ENCODE measurements at regions of chrX and their contacts with region 1.

Region 1: GRCh38 chrX:138638996-138639395 is 72.5 kb downstream of the FGF13 start:
- DNase-seq: no peak
- ATAC-seq: no peak
- H3K4me3 ChIP-seq: no peak overlapping the region
- H3K4me3 Mint-ChIP-seq: no peak overlapping the region
- H3K27ac ChIP-seq: no peak overlapping the region
- H3K27ac Mint-ChIP-seq: no peak overlapping the region
- H3K4me1 ChIP-seq: no peaks in the 10 kb centered on the region
- H3K4me1 Mint-ChIP-seq: no peaks in the 10 kb centered on the region
- H3K27me3 ChIP-seq: no peaks in the 10 kb centered on the region
- H3K27me3 Mint-ChIP-seq: no peaks in the 10 kb centered on the region
- CTCF ChIP-seq: no peak

Region 2: DNA sequence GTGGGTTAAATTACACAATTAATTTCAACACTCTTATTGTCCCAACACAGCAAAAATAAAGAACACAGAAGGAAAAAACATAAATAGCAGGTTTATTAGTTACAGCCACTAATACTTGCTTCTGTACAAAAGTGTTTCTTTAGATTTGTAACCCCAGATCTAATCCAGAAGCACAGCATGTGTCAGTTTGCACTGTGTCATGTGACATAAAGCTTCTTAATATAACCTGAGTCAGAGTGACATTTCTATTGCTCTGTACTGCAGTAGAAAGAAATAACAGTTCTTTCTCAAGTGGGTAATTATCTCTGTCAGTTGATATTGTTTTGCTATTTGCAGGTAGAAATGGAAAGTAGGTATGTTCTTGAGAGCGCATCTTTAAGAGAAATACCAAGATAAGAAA is 650.5 kb before region 1 on chrX:
- CTCF ChIA-PET with region 1: no interaction called
- POLR2A ChIA-PET with region 1: no interaction called
- intact Hi-C with region 1: no loop called
- DNase-seq: no peak
- ATAC-seq: no peak
- H3K4me3 ChIP-seq: no peak overlapping the region
- H3K4me3 Mint-ChIP-seq: no peak overlapping the region
- H3K27ac ChIP-seq: no peak overlapping the region
- H3K27ac Mint-ChIP-seq: no peak overlapping the region
- H3K4me1 ChIP-seq: no peaks in the 10 kb centered on the region
- H3K4me1 Mint-ChIP-seq: no peaks in the 10 kb centered on the region
- H3K27me3 ChIP-seq: no peaks in the 10 kb centered on the region
- H3K27me3 Mint-ChIP-seq: no peaks in the 10 kb centered on the region
- CTCF ChIP-seq: no peak

Region 3: DNA sequence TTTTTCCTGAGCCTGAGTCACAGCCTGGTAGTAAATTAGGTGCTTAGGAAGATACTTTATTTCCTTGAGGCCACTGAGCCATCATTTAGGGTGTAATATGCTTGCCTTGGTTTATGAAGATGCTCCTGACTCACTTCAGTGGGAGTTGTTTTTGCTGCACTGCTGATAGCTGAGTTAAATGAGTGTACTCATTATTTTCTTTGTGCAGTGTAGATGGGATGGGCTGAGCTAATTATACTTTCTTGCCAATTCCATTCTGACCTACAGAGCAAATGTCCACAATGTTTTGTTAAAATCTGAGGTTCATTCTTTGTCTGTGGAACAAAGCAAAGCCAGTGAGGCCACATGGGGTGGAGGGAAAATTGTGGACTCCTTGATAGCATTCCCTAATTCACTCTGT is 12.5 kb after region 1 on chrX:
- CTCF ChIA-PET with region 1: no interaction called
- POLR2A ChIA-PET with region 1: no interaction called
- intact Hi-C with region 1: loop called in 1 of 2 experiments (anchors 1 kb)
- DNase-seq: no peak
- ATAC-seq: no peak
- H3K4me3 ChIP-seq: no peak overlapping the region
- H3K4me3 Mint-ChIP-seq: no peak overlapping the region
- H3K27ac ChIP-seq: no peak overlapping the region
- H3K27ac Mint-ChIP-seq: no peak overlapping the region
- H3K4me1 ChIP-seq: no peaks in the 10 kb centered on the region
- H3K4me1 Mint-ChIP-seq: no peaks in the 10 kb centered on the region
- H3K27me3 ChIP-seq: no peaks in the 10 kb centered on the region
- H3K27me3 Mint-ChIP-seq: no peaks in the 10 kb centered on the region
- CTCF ChIP-seq: no peak

Region 4: GRCh38 chrX:138683600-138683999 is 44.6 kb after region 1 on chrX:
- CTCF ChIA-PET with region 1: no interaction called
- POLR2A ChIA-PET with region 1: no interaction called
- intact Hi-C with region 1: no loop called
- DNase-seq: no peak
- ATAC-seq: no peak
- H3K4me3 ChIP-seq: no peak overlapping the region
- H3K4me3 Mint-ChIP-seq: no peak overlapping the region
- H3K27ac ChIP-seq: no peak overlapping the region
- H3K27ac Mint-ChIP-seq: no peak overlapping the region
- H3K4me1 ChIP-seq: no peaks in the 10 kb centered on the region
- H3K4me1 Mint-ChIP-seq: no peaks in the 10 kb centered on the region
- H3K27me3 ChIP-seq: no peaks in the 10 kb centered on the region
- H3K27me3 Mint-ChIP-seq: no peaks in the 10 kb centered on the region
- CTCF ChIP-seq: no peak

Measured in CD8-positive, alpha-beta T cell (primary cell).